Vagina (tissue), 2 donors: ENCODE measurements at regions of chr1 and their contacts with region 1.

Region 1: GRCh38 chr1:4951601-4952000 is 297.2 kb downstream of the AJAP1 start:
- DNase-seq: no peak
- H3K4me3 ChIP-seq: no peak overlapping the region
- H3K27ac ChIP-seq: no peak overlapping the region
- H3K4me1 ChIP-seq: no peaks in the 10 kb centered on the region
- H3K27me3 ChIP-seq: no peaks in the 10 kb centered on the region
- CTCF ChIP-seq: no peak
- POLR2A ChIP-seq: no peak

Region 2: GRCh38 chr1:4075436-4076225 is 876.0 kb before region 1 on chr1:
- intact Hi-C with region 1: loop called (anchors 5 kb)
- DNase-seq: no peak
- H3K4me3 ChIP-seq: no peak overlapping the region
- H3K27ac ChIP-seq: no peak overlapping the region
- H3K4me1 ChIP-seq: no peaks in the 10 kb centered on the region
- H3K27me3 ChIP-seq: no peaks in the 10 kb centered on the region
- CTCF ChIP-seq: no peak
- POLR2A ChIP-seq: no peak